ENCODE measurements at regions of chr16 and their contacts with region 1.

Region 1: DNA sequence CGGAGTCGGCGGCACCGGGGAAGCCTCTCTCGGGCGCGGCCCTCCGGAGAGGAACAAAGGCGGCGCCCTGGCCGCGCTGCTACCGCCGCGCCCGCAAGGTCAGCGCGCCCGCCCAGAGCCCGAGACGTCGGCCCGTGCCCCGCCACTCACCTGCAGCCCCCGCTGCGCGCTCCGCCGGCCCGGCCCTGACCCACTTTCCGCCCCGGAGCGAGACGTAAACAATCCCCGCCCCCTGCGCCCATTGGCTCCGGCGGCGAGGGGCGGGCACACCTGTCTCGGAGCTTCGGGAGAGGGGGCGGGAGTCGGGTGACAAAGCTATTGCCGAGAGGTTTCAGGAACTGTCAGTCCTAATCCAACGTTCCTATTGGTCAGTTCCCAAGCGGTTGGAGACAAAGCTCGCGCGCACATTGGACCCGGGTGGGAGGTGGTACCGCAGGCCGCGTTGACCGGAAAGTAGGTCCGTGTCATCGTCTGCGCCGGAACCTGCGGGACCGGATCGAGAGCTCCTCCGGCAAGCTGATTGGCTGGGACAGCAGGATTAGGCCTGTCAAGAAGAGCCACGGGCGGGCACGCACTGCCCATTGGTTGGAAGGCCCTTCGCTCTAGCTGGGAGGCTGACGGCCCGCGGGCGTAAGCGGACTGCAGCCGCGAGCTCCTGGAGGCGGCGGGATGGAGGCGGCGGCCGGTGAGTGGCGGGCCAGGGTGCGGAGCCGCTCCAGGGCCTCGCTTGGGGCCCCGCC is at the starts of genes NUBP2 and SPSB3:
- DNase-seq: peak; percentile 99
- H3K4me3 Mint-ChIP-seq: peak within 1 kb of the TSS; percentile 93
- H3K27ac Mint-ChIP-seq: peak within 1 kb of the TSS; percentile 81
- H3K4me1 Mint-ChIP-seq: no peaks in the 10 kb centered on the region
- H3K27me3 Mint-ChIP-seq: no peaks in the 10 kb centered on the region
- total RNA-seq, gene NUBP2: 81.6 and 82.8 TPM in 2 replicates
- total RNA-seq, gene SPSB3: 30.3 and 30.8 TPM in 2 replicates

Region 2: GRCh38 chr16:1826691-1827575 is 44.4 kb after region 1 on chr16 and contains the starts of genes FAHD1 and HAGH:
- intact Hi-C with region 1: loop called (anchors 1 kb)
- DNase-seq: peak; percentile 91
- H3K4me3 Mint-ChIP-seq: peak within 1 kb of the TSS; percentile 92
- H3K27ac Mint-ChIP-seq: peak within 1 kb of the TSS; percentile 85
- H3K4me1 Mint-ChIP-seq: peaks cover 26% of the 10 kb centered on the region
- H3K27me3 Mint-ChIP-seq: no peaks in the 10 kb centered on the region
- total RNA-seq, gene FAHD1: 19.4 and 20.2 TPM in 2 replicates
- total RNA-seq, gene HAGH: 57.8 and 58.7 TPM in 2 replicates

Region 3: DNA sequence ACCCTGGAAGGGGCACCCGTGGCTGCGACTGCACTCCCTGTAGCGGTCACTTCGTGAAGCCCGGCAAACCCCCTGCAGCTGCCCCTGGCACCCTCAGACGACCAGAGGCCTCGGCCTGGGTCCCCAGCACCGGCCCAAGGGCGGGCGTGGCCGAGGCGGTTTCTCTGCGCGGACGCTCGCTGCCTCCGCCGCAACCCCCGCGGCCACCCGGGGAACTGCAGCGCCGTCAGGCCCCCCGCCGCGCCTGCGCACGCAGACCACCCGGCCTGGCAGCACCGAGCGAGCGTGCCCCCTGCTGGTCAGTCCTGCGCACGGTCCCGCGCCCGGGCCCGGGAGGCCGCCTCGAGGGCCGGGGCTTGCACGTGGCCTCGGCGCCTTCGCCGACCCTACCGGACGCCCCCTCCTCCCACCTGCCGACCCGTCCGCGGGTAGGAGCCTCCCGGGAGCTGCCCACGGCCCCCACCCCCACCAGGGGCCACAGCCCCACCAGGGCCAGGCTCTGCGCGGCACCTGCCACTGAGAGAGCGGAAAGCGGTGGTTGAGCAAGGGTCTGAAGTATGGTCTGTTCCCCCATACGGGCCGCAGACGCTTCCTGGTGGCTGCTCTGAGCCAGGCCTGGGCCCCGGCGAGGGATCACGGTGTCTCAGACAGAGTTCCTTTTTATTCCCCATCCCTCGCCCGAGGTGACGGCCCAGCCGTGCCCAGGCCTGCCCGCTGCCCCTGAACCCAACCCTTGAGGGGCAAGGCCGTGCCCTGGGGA is 147.2 kb after region 1 on chr16:
- intact Hi-C with region 1: loop called (anchors 5 kb)
- DNase-seq: peak; percentile 91
- H3K4me3 Mint-ChIP-seq: no peak overlapping the region
- H3K27ac Mint-ChIP-seq: no peak overlapping the region
- H3K4me1 Mint-ChIP-seq: no peaks in the 10 kb centered on the region
- H3K27me3 Mint-ChIP-seq: peaks cover 2% of the 10 kb centered on the region

Region 4: DNA sequence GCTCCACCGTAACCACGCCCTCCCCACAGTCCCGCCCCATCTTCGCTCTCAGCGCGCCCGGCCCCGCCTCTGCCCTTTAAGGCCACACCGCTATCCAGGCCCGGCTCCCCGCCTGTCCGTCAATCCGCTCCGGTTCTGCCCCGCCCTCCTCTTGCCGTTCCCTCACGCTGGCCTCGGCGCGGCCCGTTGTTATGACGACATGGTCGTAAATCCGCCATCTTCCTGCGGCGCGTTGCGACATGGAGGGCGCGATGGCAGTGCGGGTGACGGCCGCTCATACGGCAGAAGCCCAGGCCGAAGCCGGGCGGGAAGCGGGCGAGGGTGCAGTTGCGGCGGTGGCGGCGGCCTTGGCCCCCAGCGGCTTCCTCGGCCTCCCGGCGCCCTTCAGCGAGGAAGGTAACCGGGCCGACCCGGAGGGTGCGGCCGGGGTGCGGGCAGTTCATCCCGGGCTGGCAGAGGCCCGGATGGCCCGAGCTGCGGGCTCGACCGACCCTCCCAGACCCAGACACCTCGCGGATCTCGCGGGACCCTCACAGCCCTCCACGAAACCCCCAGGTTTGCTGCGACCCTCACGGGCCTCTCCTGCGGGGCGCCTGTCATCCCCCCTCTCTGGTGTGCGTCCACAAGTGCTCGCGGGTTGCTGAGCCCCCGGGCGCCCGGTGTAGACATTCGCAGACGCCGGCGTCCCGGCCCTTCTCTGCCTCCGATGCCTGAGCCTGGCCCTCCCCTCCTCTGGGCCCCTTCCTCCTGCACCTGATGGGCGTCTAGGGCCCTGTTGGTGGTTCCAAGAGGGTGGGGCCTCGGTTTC is 441.1 kb after region 1 on chr16 and contains the start of gene E4F1:
- intact Hi-C with region 1: loop called (anchors 1 kb)
- DNase-seq: peak; percentile 99
- H3K4me3 Mint-ChIP-seq: peak within 1 kb of the TSS; percentile 87
- H3K27ac Mint-ChIP-seq: peak within 1 kb of the TSS; percentile 77
- H3K4me1 Mint-ChIP-seq: peaks cover 9% of the 10 kb centered on the region
- H3K27me3 Mint-ChIP-seq: no peaks in the 10 kb centered on the region
- total RNA-seq, gene E4F1: 35.6 and 37.4 TPM in 2 replicates